HepG2 (cell line): ENCODE measurements at regions of chr7 and their contacts with region 1.

Region 1: GRCh38 chr7:135662373-135663114 is at the start of gene STMP1:
- DNase-seq: peak; percentile 81
- ATAC-seq: peak; percentile 90
- H3K4me3 ChIP-seq: peak within 1 kb of the TSS; percentile 81 to 96 (median 84)
- H3K27ac ChIP-seq: peak within 1 kb of the TSS; percentile 79
- H3K4me1 ChIP-seq: peaks cover 44% of the 10 kb centered on the region
- H3K27me3 ChIP-seq: no peaks in the 10 kb centered on the region; a peak in 1 of 5 replicates
- CTCF ChIP-seq: peak; percentile 90
- EP300 ChIP-seq: no peak
- POLR2A ChIP-seq: peak; percentile 81 to 95
- RAD21 ChIP-seq: peak; percentile 72
- total RNA-seq, gene STMP1: 7.2 and 10.2 TPM in 2 replicates

Region 2: GRCh38 chr7:135601182-135601581 is 61.4 kb before region 1 on chr7:
- CTCF ChIA-PET with region 1: no interaction called
- POLR2A ChIA-PET with region 1: no interaction called
- in situ Hi-C with region 1: no loop called
- intact Hi-C with region 1: no loop called
- DNase-seq: no peak
- ATAC-seq: no peak
- H3K4me3 ChIP-seq: no peak overlapping the region
- H3K27ac ChIP-seq: no peak overlapping the region
- H3K4me1 ChIP-seq: no peaks in the 10 kb centered on the region
- H3K27me3 ChIP-seq: no peaks in the 10 kb centered on the region
- CTCF ChIP-seq: no peak
- EP300 ChIP-seq: no peak
- POLR2A ChIP-seq: no peak
- RAD21 ChIP-seq: no peak

Region 3: GRCh38 chr7:135706858-135707568 is 44.5 kb after region 1 on chr7:
- CTCF ChIA-PET with region 1: no interaction called
- POLR2A ChIA-PET with region 1: no interaction called
- in situ Hi-C with region 1: no loop called
- intact Hi-C with region 1: loop called (anchors 1 kb)
- DNase-seq: peak; percentile 11
- ATAC-seq: no peak
- H3K4me3 ChIP-seq: no peak overlapping the region
- H3K27ac ChIP-seq: no peak overlapping the region
- H3K4me1 ChIP-seq: peaks cover 29% of the 10 kb centered on the region
- H3K27me3 ChIP-seq: peaks cover 0 to 6% of the 10 kb centered on the region in 2 experiments; a peak in 3 of 5 replicates
- CTCF ChIP-seq: no peak
- EP300 ChIP-seq: no peak
- POLR2A ChIP-seq: no peak
- RAD21 ChIP-seq: no peak